ENCODE measurements at regions of chr9 and their contacts with region 1.

Region 1: GRCh38 chr9:34291023-34291422 is 38.0 kb downstream of the KIF24 start:
- DNase-seq: peak in 1 of 5 donors; percentile 8
- ATAC-seq: peak in 1 of 4 donors; percentile 34
- H3K4me3 ChIP-seq: no peak overlapping the region
- H3K27ac ChIP-seq: peak overlapping the region in 1 of 12 donors; percentile 78
- H3K4me1 ChIP-seq: peaks cover 0 to 10% (median 0%) of the 10 kb centered on the region in 12 donors
- H3K27me3 ChIP-seq: no peaks in the 10 kb centered on the region
- CTCF ChIP-seq: no peak
- POLR2A ChIP-seq: no peak

Region 2: GRCh38 chr9:34227445-34227844 is 63.6 kb before region 1 on chr9:
- intact Hi-C with region 1: no loop called
- DNase-seq: no peak
- ATAC-seq: no peak
- H3K4me3 ChIP-seq: no peak overlapping the region
- H3K27ac ChIP-seq: no peak overlapping the region
- H3K4me1 ChIP-seq: peaks cover 0 to 19% (median 3%) of the 10 kb centered on the region in 12 donors
- H3K27me3 ChIP-seq: no peaks in the 10 kb centered on the region
- CTCF ChIP-seq: no peak
- POLR2A ChIP-seq: no peak

Region 3: GRCh38 chr9:34279411-34279810 is 11.6 kb before region 1 on chr9:
- intact Hi-C with region 1: loop called in 1 of 10 experiments (anchors 2 kb)
- DNase-seq: no peak
- ATAC-seq: no peak
- H3K4me3 ChIP-seq: no peak overlapping the region
- H3K27ac ChIP-seq: no peak overlapping the region
- H3K4me1 ChIP-seq: peaks cover 0 to 14% (median 0%) of the 10 kb centered on the region in 12 donors
- H3K27me3 ChIP-seq: no peaks in the 10 kb centered on the region
- CTCF ChIP-seq: no peak
- POLR2A ChIP-seq: no peak

Region 4: GRCh38 chr9:34363619-34364351 is 72.8 kb after region 1 on chr9:
- intact Hi-C with region 1: no loop called
- DNase-seq: peak in 4 of 5 donors; percentile 59 to 67 (median 64)
- ATAC-seq: peak; percentile 70 to 92 (median 80)
- H3K4me3 ChIP-seq: peak overlapping the region in 8 of 12 donors; percentile 3 to 29 (median 10)
- H3K27ac ChIP-seq: peak overlapping the region; percentile 42 to 92 (median 76)
- H3K4me1 ChIP-seq: peaks cover 0 to 25% (median 15%) of the 10 kb centered on the region in 12 donors
- H3K27me3 ChIP-seq: no peaks in the 10 kb centered on the region
- CTCF ChIP-seq: no peak
- POLR2A ChIP-seq: no peak

Measured in heart left ventricle (tissue), 16 donors.